ENCODE measurements at regions of chr17 and their contacts with region 1.

Region 1: DNA sequence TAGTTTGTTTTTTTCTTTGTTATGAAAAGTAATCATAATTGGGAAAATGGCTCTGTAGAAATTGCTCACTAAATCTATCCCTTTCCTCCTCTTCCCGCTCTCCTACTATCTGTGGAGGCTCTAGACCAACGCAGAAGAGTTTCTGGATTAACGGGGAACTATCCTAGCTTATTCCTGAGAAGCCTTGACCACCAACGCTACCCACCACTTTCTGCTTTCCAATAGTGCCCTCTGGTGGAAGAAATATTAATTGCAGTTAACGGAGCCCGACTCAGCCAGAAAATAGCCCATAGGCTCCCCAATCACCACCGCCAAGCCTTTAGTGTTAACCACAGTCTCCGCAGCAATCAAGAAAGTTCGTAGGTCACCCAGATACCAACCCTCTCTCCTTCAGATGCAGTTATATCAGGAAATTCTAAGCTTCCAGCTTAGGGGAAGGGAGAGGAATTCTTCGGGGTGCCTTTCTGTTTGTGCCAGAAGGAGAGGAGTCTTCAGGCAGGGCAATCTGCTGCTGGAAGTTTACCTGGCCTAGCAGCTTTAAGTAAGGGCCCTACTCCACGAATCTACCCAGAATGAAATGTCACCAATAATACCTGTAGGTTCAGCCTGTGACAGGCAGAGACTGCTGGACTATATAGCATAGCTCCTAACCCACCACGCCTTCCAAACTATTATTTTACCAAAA is 23.0 kb upstream of the NSRP1 start:
- DNase-seq: peak; percentile 13 to 71 (median 40)
- ATAC-seq: peak; percentile 78
- H3K4me3 ChIP-seq: no peak overlapping the region
- H3K4me3 Mint-ChIP-seq: peak overlapping the region in 1 of 10 donors; percentile 11
- H3K27ac ChIP-seq: no peak overlapping the region
- H3K27ac Mint-ChIP-seq: no peak overlapping the region
- H3K4me1 ChIP-seq: no peaks in the 10 kb centered on the region
- H3K4me1 Mint-ChIP-seq: peaks cover 0 to 8% (median 5%) of the 10 kb centered on the region in 7 donors
- H3K27me3 ChIP-seq: no peaks in the 10 kb centered on the region
- H3K27me3 Mint-ChIP-seq: peaks cover 21 to 56% (median 33%) of the 10 kb centered on the region in 5 donors

Region 2: GRCh38 chr17:29579866-29580771 is 513.5 kb before region 1 on chr17:
- CTCF ChIA-PET with region 1: no interaction called
- POLR2A ChIA-PET with region 1: no interaction called
- intact Hi-C with region 1: loop called in 1 of 2 experiments (anchors 1 kb)
- DNase-seq: peak; percentile 79 to 90 (median 87)
- ATAC-seq: peak; percentile 99
- H3K4me3 ChIP-seq: no peak overlapping the region
- H3K4me3 Mint-ChIP-seq: peak overlapping the region in 2 of 10 donors; percentile 2 to 32
- H3K27ac ChIP-seq: peak overlapping the region; percentile 53
- H3K27ac Mint-ChIP-seq: peak overlapping the region; percentile 7 to 96 (median 81)
- H3K4me1 ChIP-seq: peaks cover 2 to 17% of the 10 kb centered on the region in 2 donors
- H3K4me1 Mint-ChIP-seq: peaks cover 21 to 24% (median 22%) of the 10 kb centered on the region in 7 donors
- H3K27me3 ChIP-seq: no peaks in the 10 kb centered on the region
- H3K27me3 Mint-ChIP-seq: no peaks in the 10 kb centered on the region